ENCODE measurements at regions of chr5 and their contacts with region 1.

Region 1: DNA sequence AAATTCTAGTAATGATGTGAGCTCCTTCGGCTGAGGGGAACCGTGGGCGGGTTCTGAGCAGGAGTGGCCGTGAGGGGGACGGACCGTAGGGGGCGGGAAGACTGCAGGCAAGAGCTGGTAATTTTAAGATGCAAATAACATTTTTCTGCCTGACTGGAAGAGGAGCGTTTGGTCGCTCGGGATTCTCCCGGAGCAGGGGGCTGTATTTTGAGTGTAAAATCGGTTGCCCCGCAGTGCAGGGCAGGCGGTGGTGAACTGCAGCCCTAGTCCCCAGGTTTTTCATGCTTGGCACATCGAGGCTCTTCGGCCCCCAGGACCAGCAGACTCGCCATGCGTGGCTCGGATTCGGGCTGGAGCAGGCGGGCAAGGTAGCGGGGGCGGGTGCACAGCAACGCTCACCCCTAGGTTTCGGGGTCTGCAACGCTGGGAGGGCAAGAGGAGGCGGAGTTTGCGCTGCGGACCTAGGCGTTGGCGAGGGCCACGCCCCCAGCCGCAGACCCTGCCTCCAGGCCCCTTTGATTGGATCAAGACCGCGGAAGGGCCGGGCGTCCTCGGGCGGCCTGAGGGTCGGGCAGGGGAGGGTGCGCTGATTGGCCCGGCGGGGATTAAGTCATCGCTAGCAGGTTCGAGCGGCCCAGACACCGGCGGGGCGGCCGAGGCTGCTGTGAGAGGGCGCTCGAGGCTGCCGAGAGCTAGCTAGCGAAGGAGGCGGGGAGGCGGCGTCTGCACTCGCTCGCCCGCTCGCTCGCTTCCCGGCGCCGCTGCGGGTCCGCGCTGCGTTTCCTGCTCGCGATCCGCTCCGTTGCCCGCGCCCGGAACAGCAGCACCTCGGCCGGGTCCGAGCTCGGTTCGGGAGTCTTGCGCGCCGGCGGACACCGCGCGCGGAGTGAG is at the start of gene ARHGAP26:
- DNase-seq: peak; percentile 97
- H3K4me3 ChIP-seq: peak within 1 kb of the TSS; percentile 70 to 87
- H3K27ac ChIP-seq: peak within 1 kb of the TSS; percentile 52 to 89; a peak in 3 of 4 replicates
- H3K4me1 ChIP-seq: peaks cover 12 to 17% of the 10 kb centered on the region in 2 experiments; a peak in 3 of 4 replicates
- H3K27me3 ChIP-seq: no peaks in the 10 kb centered on the region
- CTCF ChIP-seq: peak; percentile 36
- EP300 ChIP-seq: no peak
- RAD21 ChIP-seq: peak; percentile 59
- polyA plus RNA-seq, gene ARHGAP26: 6.1 and 8.4 TPM in 2 replicates

Region 2: DNA sequence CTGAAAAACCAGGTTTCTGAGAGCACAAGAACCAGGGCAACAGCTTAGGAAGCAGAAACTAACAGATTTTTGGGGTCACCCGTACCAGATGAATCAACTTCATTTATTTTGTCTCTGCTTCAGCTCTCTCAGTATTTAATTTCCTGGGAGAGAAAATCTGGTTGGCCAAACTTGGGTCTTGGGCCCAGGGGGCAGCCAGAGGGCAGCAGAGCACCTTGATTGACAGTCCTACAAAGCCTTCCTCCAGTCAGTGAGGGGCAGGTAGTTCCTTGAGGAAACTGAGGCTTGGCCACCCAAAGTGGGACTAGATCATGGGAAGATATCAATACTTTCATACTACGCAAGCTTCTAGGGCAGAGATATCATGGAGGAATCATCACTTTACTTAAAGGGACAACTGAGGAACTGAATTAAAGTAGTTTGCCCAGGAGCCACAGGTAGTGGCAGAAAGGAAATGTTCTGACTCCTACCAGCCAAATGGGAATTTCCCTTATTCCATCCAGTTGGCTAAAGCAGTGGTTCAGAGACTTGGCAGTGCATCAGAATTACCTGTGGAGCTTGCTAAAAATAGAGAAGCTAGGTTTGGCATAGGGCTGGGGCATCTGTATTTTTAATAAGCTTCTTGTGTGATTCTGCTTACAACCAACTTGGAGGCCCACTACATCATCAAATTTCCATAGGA is 21.3 kb before region 1 on chr5:
- CTCF ChIA-PET with region 1: interaction called, 19 read pairs
- POLR2A ChIA-PET with region 1: interaction called, 3 read pairs
- DNase-seq: peak; percentile 16
- H3K4me3 ChIP-seq: no peak overlapping the region; a peak in 1 of 4 replicates
- H3K27ac ChIP-seq: peak overlapping the region in 1 of 2 experiments; percentile 70; a peak in 2 of 4 replicates
- H3K4me1 ChIP-seq: peaks cover 11 to 26% of the 10 kb centered on the region in 2 experiments
- H3K27me3 ChIP-seq: no peaks in the 10 kb centered on the region
- CTCF ChIP-seq: peak; percentile 49
- EP300 ChIP-seq: no peak
- RAD21 ChIP-seq: peak; percentile 80

Region 3: GRCh38 chr5:142783601-142784341 is 13.8 kb after region 1 on chr5:
- CTCF ChIA-PET with region 1: interaction called, 26 read pairs
- POLR2A ChIA-PET with region 1: interaction called, 15 read pairs
- DNase-seq: peak; percentile 76
- H3K4me3 ChIP-seq: no peak overlapping the region
- H3K27ac ChIP-seq: peak overlapping the region; percentile 17 to 93; a peak in 3 of 4 replicates
- H3K4me1 ChIP-seq: peaks cover 35 to 54% of the 10 kb centered on the region in 2 experiments
- H3K27me3 ChIP-seq: no peaks in the 10 kb centered on the region
- CTCF ChIP-seq: peak; percentile 8; the same call in 1 of the 2 replicates
- EP300 ChIP-seq: peak in 1 of 2 experiments; percentile 60; a peak in 1 of 4 replicates
- RAD21 ChIP-seq: peak; percentile 13; the same call in 1 of the 2 replicates

Region 4: DNA sequence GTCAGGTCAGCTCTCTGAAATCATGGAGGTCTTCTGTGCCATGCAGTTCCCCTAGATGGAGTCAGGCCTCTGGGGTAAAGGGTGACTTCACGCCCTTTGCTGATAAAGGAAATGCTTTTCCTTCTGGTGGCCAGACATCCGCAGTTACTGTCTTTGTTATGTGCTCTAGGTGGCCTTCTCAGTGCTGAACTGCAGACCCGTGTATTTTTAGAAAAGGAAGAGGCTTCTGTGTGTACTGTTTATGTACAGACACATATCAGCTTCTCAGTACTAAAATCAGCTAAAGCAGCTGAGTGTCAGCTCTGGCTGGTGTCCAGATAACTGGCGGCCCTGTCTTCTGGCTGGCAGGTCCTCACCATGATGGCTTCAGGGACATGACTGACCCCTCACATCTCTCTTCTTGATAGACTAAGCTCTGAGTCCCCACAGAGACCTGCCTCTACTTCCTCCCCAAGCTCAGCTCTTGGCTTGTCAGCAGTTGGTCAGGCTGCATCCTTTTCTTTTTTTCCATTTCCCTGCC is 75.5 kb after region 1 on chr5:
- CTCF ChIA-PET with region 1: interaction called, 18 read pairs
- POLR2A ChIA-PET with region 1: interaction called, 3 read pairs
- DNase-seq: peak; percentile 45
- H3K4me3 ChIP-seq: no peak overlapping the region
- H3K27ac ChIP-seq: peak overlapping the region in 1 of 2 experiments; percentile 93; a peak in 2 of 4 replicates
- H3K4me1 ChIP-seq: peaks cover 9 to 49% of the 10 kb centered on the region in 2 experiments
- H3K27me3 ChIP-seq: no peaks in the 10 kb centered on the region
- CTCF ChIP-seq: no peak
- EP300 ChIP-seq: peak in 1 of 2 experiments; percentile 6; a peak in 1 of 4 replicates
- RAD21 ChIP-seq: peak; percentile 27; the same call in 1 of the 2 replicates

Region 5: DNA sequence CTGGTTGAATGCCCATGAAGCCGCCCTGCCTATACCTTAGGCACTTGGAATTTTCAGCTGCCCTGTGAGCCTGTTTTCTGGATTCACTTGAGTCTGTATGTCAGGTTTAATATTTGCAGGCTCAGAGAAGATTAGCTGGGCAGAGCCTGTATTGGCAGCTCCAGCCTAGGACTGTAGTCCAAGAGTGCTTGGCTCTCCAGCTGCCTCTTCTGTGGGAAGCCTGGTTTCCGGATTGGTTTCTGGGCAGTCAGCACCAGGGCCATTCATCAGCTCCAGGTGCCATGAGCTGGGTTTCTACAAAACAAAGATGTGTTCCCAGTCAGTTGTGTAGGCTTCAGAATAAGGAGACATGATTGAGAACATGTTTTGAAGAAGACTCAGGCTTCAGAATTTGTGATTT is 90.3 kb after region 1 on chr5:
- CTCF ChIA-PET with region 1: interaction called, 24 read pairs
- POLR2A ChIA-PET with region 1: no interaction called
- DNase-seq: no peak
- H3K4me3 ChIP-seq: no peak overlapping the region
- H3K27ac ChIP-seq: peak overlapping the region in 1 of 2 experiments; percentile 39; a peak in 2 of 4 replicates
- H3K4me1 ChIP-seq: peaks cover 10 to 53% of the 10 kb centered on the region in 2 experiments; a peak in 2 of 4 replicates
- H3K27me3 ChIP-seq: no peaks in the 10 kb centered on the region
- CTCF ChIP-seq: no peak
- EP300 ChIP-seq: no peak
- RAD21 ChIP-seq: no peak

Region 6: GRCh38 chr5:142874537-142874936 is 104.6 kb after region 1 on chr5:
- CTCF ChIA-PET with region 1: interaction called, 62 read pairs
- POLR2A ChIA-PET with region 1: interaction called, 10 read pairs
- DNase-seq: no peak
- H3K4me3 ChIP-seq: no peak overlapping the region
- H3K27ac ChIP-seq: peak overlapping the region; percentile 29 to 36; a peak in 2 of 4 replicates
- H3K4me1 ChIP-seq: peaks cover 50 to 57% of the 10 kb centered on the region in 2 experiments
- H3K27me3 ChIP-seq: no peaks in the 10 kb centered on the region
- CTCF ChIP-seq: no peak
- EP300 ChIP-seq: no peak
- RAD21 ChIP-seq: no peak

Region 7: DNA sequence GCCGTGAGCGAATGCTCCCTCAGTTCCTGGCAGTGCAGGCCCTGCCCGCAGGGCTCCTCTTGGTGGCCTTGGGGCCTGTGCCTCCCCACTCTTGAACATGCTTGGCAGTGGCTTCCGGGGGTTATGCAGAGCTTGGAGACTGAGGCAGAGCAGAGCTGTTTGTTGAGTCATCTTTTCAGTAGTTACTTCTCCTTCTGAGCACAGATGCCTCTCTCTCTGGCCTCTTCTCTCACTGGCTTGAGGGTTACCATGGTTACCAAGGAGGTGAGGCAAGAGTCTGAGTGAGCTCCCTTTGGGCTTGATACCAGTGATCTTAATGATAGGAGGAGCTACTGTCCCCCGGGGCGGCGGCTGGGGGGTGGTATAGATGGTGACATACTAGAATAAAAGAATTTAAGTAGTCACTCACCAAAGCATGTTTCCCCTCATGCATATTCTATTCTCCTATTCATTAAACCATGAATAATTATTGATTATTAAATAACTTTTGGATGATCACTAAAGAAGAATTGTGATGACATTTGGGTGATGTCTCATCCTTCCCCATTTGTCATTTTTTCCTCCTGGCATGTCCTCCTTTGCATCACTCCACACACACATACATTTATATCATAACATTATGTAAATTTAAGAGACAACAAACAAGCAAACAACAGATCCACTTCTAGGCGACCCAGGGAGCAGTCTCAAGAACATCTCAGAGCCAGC is 111.2 kb after region 1 on chr5:
- CTCF ChIA-PET with region 1: interaction called, 59 read pairs
- POLR2A ChIA-PET with region 1: no interaction called
- DNase-seq: no peak
- H3K4me3 ChIP-seq: no peak overlapping the region
- H3K27ac ChIP-seq: no peak overlapping the region
- H3K4me1 ChIP-seq: peaks cover 4 to 11% of the 10 kb centered on the region in 2 experiments; a peak in 2 of 4 replicates
- H3K27me3 ChIP-seq: no peaks in the 10 kb centered on the region
- CTCF ChIP-seq: no peak
- EP300 ChIP-seq: no peak
- RAD21 ChIP-seq: no peak

Region 8: DNA sequence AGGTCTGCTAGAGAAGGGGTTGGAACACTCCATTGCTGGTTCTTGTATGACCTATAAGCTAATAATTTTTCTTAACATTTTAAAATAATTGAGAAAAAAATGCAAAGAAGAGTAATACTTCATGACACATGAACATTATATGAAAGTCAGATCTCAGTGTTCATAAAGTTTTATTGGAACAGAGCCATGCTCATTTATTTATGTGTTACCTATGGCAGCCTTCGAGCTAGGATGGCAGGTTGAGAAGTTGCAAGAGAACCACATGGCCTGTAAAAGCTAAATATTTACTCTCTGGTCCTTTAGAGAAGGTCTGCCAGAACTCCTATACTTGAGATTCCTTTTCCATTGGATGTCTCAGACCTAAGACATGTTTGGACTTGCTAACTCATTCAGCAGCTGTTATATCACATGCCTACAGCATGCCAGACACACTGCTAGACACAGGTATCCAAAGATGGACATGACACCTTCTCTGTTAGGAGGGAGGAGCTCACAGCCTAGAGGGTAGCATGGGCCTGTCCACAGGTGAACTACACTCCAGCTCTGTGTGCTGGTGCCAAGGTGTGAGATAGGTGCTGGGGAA is 304.5 kb after region 1 on chr5:
- CTCF ChIA-PET with region 1: no interaction called
- POLR2A ChIA-PET with region 1: no interaction called
- DNase-seq: no peak
- H3K4me3 ChIP-seq: no peak overlapping the region
- H3K27ac ChIP-seq: no peak overlapping the region
- H3K4me1 ChIP-seq: peaks cover 0 to 13% of the 10 kb centered on the region in 2 experiments; a peak in 2 of 4 replicates
- H3K27me3 ChIP-seq: no peaks in the 10 kb centered on the region
- CTCF ChIP-seq: no peak
- EP300 ChIP-seq: no peak
- RAD21 ChIP-seq: no peak